GM12878 (cell line): ENCODE measurements at regions of chr13 and their contacts with region 1.

Region 1: DNA sequence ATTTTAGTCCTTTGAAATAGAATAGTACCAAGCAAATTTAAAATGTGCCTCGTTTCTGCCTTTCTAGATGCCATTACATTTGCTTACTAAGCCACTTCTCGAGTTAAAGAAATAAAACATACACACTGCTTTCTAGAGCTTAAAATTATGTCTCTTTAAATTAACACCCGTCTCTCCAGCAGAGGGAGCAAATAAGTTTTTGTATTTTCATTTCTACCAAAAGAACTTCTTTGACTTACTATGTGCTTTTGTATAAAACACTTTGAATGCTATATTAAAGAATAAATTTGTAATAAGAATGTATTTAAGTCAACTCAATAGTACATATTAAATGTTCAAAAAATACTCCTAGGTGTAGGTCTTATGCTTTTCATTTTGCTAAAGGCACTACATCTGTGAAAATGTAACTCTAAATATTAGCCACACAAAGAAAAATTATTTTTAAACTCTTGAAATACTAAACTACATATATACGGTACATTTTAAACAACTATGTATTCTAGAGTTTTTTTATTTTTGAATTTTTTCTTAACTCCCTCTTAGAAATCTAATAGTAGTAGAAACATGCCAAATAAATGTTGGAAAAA is 269.3 kb upstream of the MIR17HG start:
- DNase-seq: no peak
- ATAC-seq: peak; percentile 44
- H3K4me3 ChIP-seq: no peak overlapping the region
- H3K27ac ChIP-seq: no peak overlapping the region
- H3K4me1 ChIP-seq: no peaks in the 10 kb centered on the region
- H3K27me3 ChIP-seq: no peaks in the 10 kb centered on the region
- CTCF ChIP-seq: peak in 2 of 3 experiments; percentile 20 to 28; a peak in 3 of 6 replicates
- EP300 ChIP-seq: no peak
- POLR2A ChIP-seq: no peak
- RAD21 ChIP-seq: peak; percentile 34; the same call in 1 of the 2 replicates

Region 2: GRCh38 chr13:91056746-91057145 is 21.4 kb before region 1 on chr13:
- CTCF ChIA-PET with region 1: interaction called, 8 read pairs
- POLR2A ChIA-PET with region 1: interaction called, 3 read pairs
- RAD21 ChIA-PET with region 1: interaction called, 5 read pairs
- SMC1A ChIA-PET with region 1: interaction called, 10 read pairs
- in situ Hi-C with region 1: no loop called
- intact Hi-C with region 1: no loop called
- DNase-seq: peak; percentile 57
- ATAC-seq: peak; percentile 95
- H3K4me3 ChIP-seq: no peak overlapping the region
- H3K27ac ChIP-seq: peak overlapping the region; percentile 58; the same call in 1 of the 2 replicates
- H3K4me1 ChIP-seq: no peaks in the 10 kb centered on the region
- H3K27me3 ChIP-seq: no peaks in the 10 kb centered on the region
- CTCF ChIP-seq: no peak
- EP300 ChIP-seq: peak; percentile 30 to 33; a peak in 1 of 4 replicates
- POLR2A ChIP-seq: no peak
- RAD21 ChIP-seq: no peak

Region 3: GRCh38 chr13:91066745-91067144 is 11.4 kb before region 1 on chr13:
- CTCF ChIA-PET with region 1: interaction called, 9 read pairs
- POLR2A ChIA-PET with region 1: interaction called, 3 read pairs
- RAD21 ChIA-PET with region 1: no interaction called
- SMC1A ChIA-PET with region 1: interaction called, 14 read pairs
- in situ Hi-C with region 1: no loop called
- intact Hi-C with region 1: no loop called
- DNase-seq: no peak
- ATAC-seq: no peak
- H3K4me3 ChIP-seq: no peak overlapping the region
- H3K27ac ChIP-seq: no peak overlapping the region
- H3K4me1 ChIP-seq: no peaks in the 10 kb centered on the region
- H3K27me3 ChIP-seq: no peaks in the 10 kb centered on the region
- CTCF ChIP-seq: no peak
- EP300 ChIP-seq: no peak
- POLR2A ChIP-seq: no peak
- RAD21 ChIP-seq: no peak

Region 4: GRCh38 chr13:91247768-91248167 is 169.6 kb after region 1 on chr13:
- CTCF ChIA-PET with region 1: interaction called, 4 read pairs
- POLR2A ChIA-PET with region 1: no interaction called
- RAD21 ChIA-PET with region 1: interaction called, 9 read pairs
- SMC1A ChIA-PET with region 1: interaction called, 5 read pairs
- in situ Hi-C with region 1: no loop called
- intact Hi-C with region 1: loop called (anchors 5 kb)
- DNase-seq: no peak
- ATAC-seq: 0 out of 3 replicates have a peak, but pooled peaks have one; percentile 27
- H3K4me3 ChIP-seq: no peak overlapping the region
- H3K27ac ChIP-seq: no peak overlapping the region
- H3K4me1 ChIP-seq: no peaks in the 10 kb centered on the region
- H3K27me3 ChIP-seq: peaks cover 0 to 7% of the 10 kb centered on the region in 2 experiments; a peak in 3 of 4 replicates
- CTCF ChIP-seq: peak in 2 of 3 experiments; percentile 4 to 31; a peak in 3 of 6 replicates
- EP300 ChIP-seq: no peak
- POLR2A ChIP-seq: no peak
- RAD21 ChIP-seq: peak; percentile 52